Activated CD8-positive, alpha-beta T cell treated with anti-CD3 and anti-CD28 coated beads, Interleukin-2, amount 10 ng/mL, durations not matched to agents 7 days and 5 days (primary cell): ENCODE measurements at regions of chr15 and their contacts with region 1.

Region 1: DNA sequence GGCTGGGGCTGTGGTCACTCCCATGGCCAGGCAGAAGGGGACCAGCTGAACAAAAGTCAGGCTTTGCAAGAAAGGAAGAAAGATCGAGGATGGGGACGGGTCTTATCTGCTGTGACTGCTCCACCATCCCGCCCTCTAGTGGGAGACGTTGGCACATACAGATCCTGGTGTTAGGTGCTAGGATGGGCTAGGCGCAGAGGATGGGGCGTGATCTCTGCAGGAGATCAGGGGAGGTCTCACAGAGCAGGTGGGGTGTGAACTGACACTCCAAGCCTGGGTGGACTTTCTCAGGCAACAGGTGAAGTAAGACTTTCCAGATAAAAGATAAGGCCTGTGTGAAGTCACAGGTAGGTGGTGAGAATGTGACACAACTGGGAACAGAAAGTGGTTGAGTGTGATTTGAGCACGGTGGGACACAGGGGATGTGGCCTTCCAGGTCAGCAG is 141.9 kb upstream of the SMAD3 start:
- DNase-seq: peak; percentile 60
- ATAC-seq: peak; percentile 78
- H3K4me3 Mint-ChIP-seq: no peak overlapping the region
- H3K27ac Mint-ChIP-seq: no peak overlapping the region
- H3K4me1 Mint-ChIP-seq: peaks cover 15% of the 10 kb centered on the region
- H3K27me3 Mint-ChIP-seq: peaks cover 26% of the 10 kb centered on the region

Region 2: GRCh38 chr15:66907826-66908743 is 15.4 kb before region 1 on chr15:
- CTCF ChIA-PET with region 1: interaction called, 20 read pairs
- POLR2A ChIA-PET with region 1: no interaction called
- DNase-seq: no peak
- ATAC-seq: no peak
- H3K4me3 Mint-ChIP-seq: no peak overlapping the region
- H3K27ac Mint-ChIP-seq: peak overlapping the region; percentile 20
- H3K4me1 Mint-ChIP-seq: peaks cover 50% of the 10 kb centered on the region
- H3K27me3 Mint-ChIP-seq: no peaks in the 10 kb centered on the region